Activated T-helper 1 cell treated with anti-CD3 and anti-CD28 coated beads, Interleukin-12 subunit alpha, Interleukin-12 subunit beta, Interleukin-2, Interleukin-4 antibody, amounts not matched to agents 30 ng/mL and 10 ng/mL and 1 ng/mL, durations not matched to agents 14 hours and 24 hours and 36 hours (primary cell): ENCODE measurements at regions of chr7 and their contacts with region 1.

Region 1: DNA sequence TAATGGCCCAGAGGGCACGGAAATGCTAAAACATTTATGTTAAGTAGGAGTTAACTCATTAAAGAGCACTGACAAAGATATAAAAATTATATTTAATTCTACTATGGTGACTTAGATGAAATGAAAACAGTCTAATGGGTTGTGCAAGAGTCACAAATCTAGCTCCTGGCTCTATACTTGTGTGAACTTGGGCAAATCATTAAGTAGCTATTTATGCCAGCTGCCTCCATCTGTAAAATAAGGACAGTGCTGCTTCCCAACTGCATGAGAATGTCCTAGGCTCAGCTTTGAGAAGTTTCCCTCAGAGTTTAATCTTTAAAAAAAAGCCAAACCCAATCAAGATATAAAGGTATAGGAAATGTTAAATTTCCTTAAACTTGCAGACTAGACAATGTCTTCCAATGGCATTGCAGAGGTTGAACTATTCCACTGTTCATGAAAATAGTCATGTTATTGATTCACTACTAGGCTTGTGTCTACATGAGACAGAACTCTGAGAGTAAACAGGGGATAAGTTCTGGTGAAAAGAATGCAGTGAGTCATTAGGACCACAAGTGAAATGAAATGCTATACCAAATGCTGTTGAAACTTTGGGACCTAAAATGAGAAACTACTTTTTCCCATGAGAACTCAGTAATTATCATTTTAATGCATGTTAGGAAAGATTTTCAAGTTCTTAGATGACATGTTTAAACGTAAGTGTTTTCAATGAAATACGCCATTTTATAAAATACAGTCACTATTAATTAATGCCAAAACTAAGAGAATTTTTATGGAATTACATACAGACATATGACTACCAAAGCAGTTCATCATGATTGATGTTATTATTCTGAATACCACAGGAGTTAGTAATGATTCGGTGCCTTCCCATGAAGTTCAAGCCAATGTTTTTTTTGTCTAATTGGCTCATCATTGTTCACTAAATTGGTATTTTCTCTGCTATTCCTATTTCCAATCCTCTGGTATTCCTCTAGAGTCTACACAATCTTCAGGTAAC is 84.2 kb downstream of the CDK6 start:
- DNase-seq: no peak
- H3K4me3 Mint-ChIP-seq: no peak overlapping the region
- H3K27ac Mint-ChIP-seq: peak overlapping the region; percentile 68
- H3K4me1 Mint-ChIP-seq: peaks cover 87% of the 10 kb centered on the region
- H3K27me3 Mint-ChIP-seq: no peaks in the 10 kb centered on the region

Region 2: GRCh38 chr7:92708111-92709042 is 43.8 kb before region 1 on chr7:
- intact Hi-C with region 1: loop called (anchors 5 kb)
- DNase-seq: no peak
- H3K4me3 Mint-ChIP-seq: no peak overlapping the region
- H3K27ac Mint-ChIP-seq: peak overlapping the region; percentile 84
- H3K4me1 Mint-ChIP-seq: peaks cover 59% of the 10 kb centered on the region
- H3K27me3 Mint-ChIP-seq: no peaks in the 10 kb centered on the region

Region 3: GRCh38 chr7:92768501-92769393 is 16.5 kb after region 1 on chr7:
- intact Hi-C with region 1: loop called (anchors 1 kb)
- DNase-seq: peak; percentile 20
- H3K4me3 Mint-ChIP-seq: peak overlapping the region; percentile 47
- H3K27ac Mint-ChIP-seq: peak overlapping the region; percentile 85
- H3K4me1 Mint-ChIP-seq: peaks cover 83% of the 10 kb centered on the region
- H3K27me3 Mint-ChIP-seq: no peaks in the 10 kb centered on the region

Region 4: GRCh38 chr7:93055543-93056107 is 303.4 kb after region 1 on chr7:
- intact Hi-C with region 1: no loop called
- DNase-seq: no peak
- H3K4me3 Mint-ChIP-seq: no peak overlapping the region
- H3K27ac Mint-ChIP-seq: no peak overlapping the region
- H3K4me1 Mint-ChIP-seq: peaks cover 19% of the 10 kb centered on the region
- H3K27me3 Mint-ChIP-seq: peaks cover 6% of the 10 kb centered on the region